IMR-90 (cell line): ENCODE measurements at regions of chr15 and their contacts with region 1.

Region 1: DNA sequence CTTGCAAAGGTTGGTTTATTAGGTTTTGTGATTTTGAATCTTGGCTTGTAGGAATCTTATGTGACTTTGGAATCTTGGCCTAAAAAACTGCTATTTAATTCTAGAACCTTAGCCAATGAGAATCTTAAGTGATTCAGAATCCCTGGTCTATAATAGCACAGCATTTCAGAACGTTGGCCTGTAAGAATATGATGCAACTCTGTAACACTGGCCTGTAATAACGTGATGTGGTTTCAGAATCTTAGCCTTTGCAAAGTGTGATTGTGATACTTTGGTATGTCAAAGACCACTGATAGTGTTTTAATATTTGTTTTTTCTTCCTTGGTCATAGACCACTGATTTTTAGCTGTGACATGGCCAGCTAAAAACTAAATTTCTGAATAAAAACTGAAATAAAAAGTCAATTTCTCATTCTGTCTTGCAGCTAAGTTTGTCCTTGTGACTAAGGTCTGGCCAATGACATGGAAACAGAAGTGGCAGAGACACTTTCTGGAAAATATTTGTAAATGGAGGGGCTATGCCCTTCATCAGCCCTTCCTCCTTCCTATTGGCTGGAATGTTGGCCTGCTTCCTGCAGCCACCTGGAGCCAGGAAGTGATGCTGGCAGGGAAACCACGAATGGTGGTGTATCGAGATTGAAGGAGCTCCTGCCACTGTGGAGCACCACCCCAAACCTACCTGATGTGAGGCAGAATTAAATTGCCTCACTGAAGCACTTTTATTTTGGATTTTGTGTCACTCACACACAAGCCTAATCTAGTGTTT is 42.3 kb upstream of the CORO2B start:
- DNase-seq: peak; percentile 98
- ATAC-seq: peak; percentile 89
- H3K4me3 ChIP-seq: no peak overlapping the region
- H3K27ac ChIP-seq: peak overlapping the region; percentile 96; the same call in 1 of the 2 replicates
- H3K4me1 ChIP-seq: peaks cover 7% of the 10 kb centered on the region
- H3K27me3 ChIP-seq: no peaks in the 10 kb centered on the region
- CTCF ChIP-seq: no peak
- POLR2A ChIP-seq: no peak
- RAD21 ChIP-seq: no peak

Region 2: GRCh38 chr15:68441045-68441743 is 95.3 kb before region 1 on chr15:
- CTCF ChIA-PET with region 1: interaction called, 3 read pairs
- POLR2A ChIA-PET with region 1: no interaction called
- dilution Hi-C with region 1: no loop called
- in situ Hi-C with region 1: no loop called
- intact Hi-C with region 1: loop called (anchors 5 kb)
- DNase-seq: peak; percentile 34
- ATAC-seq: peak; percentile 87
- H3K4me3 ChIP-seq: no peak overlapping the region
- H3K27ac ChIP-seq: peak overlapping the region; percentile 66; the same call in 1 of the 2 replicates
- H3K4me1 ChIP-seq: peaks cover 15% of the 10 kb centered on the region
- H3K27me3 ChIP-seq: peaks cover 20% of the 10 kb centered on the region
- CTCF ChIP-seq: no peak
- POLR2A ChIP-seq: no peak
- RAD21 ChIP-seq: no peak

Region 3: DNA sequence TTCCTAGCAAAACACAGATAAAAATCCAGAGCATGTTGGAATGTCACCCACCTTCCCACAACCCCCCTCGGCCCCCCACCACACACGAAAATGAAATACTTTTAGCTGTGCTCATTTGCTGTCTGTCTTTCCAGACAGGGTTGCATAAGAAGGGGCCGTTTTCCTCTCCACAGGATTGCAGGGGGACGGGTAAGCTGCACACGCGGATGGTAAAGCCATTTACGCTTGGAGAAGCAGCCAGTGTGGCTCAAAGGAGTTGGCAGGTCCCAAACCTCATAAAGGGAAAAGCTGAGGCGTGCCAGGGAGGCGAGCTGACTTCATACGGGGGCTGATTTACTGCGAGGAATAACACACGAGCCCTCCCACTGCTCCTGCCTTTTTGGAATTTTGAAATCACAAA is 57.1 kb before region 1 on chr15:
- CTCF ChIA-PET with region 1: no interaction called
- POLR2A ChIA-PET with region 1: no interaction called
- dilution Hi-C with region 1: no loop called
- in situ Hi-C with region 1: no loop called
- intact Hi-C with region 1: no loop called
- DNase-seq: peak; percentile 59
- ATAC-seq: peak; percentile 77
- H3K4me3 ChIP-seq: no peak overlapping the region
- H3K27ac ChIP-seq: peak overlapping the region; percentile 24; the same call in 1 of the 2 replicates
- H3K4me1 ChIP-seq: peaks cover 11% of the 10 kb centered on the region
- H3K27me3 ChIP-seq: peaks cover 8% of the 10 kb centered on the region
- CTCF ChIP-seq: no peak
- POLR2A ChIP-seq: no peak
- RAD21 ChIP-seq: no peak

Region 4: DNA sequence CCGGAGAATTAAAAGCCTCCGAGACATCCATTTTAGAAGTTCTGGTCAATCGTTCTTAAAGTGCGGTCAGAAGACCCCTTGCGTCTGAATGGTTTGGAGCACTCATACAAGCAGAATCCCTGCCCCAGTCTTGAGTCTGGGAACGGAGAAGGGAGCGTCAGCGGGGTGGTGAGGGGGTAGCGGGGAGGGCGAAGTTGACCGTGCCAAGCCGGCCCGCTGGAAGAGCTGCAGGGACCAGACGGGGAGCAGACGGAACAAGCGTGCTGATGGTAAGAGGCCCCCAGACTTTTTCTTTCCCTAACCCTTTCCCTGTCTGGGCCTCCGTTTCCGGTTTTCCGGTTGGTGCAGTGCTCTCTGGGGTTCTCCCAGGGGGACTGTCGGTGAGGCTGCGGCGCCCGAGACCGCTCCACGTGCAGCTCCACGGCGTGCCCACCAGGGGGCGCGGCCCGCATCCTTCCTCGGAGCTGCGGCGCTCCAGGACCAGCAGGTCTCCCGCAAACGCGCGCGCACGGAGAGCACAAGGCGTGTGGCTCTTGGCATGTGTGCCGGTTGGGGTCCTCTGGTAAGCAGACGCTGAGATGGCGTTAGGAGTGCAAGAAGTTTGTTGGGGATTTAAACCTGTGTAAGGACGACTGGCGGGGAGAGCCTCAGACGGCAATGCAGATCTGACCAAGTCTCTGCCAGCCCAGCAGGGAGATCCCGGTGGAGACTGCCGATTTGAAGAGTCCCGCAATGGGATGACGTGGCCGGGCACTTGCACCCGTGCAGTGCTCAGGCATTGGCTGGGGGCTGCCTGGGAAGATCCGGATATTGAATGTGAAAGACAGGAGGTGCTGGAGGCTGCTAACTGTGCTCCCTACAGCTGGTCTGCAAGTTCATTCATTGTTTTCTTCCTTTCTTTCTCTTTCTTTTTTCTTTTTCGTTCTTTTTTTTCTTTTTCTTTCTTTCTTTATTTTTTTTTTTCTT is 23.1 kb after region 1 on chr15:
- CTCF ChIA-PET with region 1: no interaction called
- POLR2A ChIA-PET with region 1: no interaction called
- dilution Hi-C with region 1: no loop called
- in situ Hi-C with region 1: no loop called
- intact Hi-C with region 1: no loop called
- DNase-seq: peak; percentile 70
- ATAC-seq: peak; percentile 99
- H3K4me3 ChIP-seq: peak overlapping the region; percentile 51
- H3K27ac ChIP-seq: no peak overlapping the region
- H3K4me1 ChIP-seq: no peaks in the 10 kb centered on the region
- H3K27me3 ChIP-seq: peaks cover 4% of the 10 kb centered on the region; the same call in 1 of the 2 replicates
- CTCF ChIP-seq: peak; percentile 90
- POLR2A ChIP-seq: no peak
- RAD21 ChIP-seq: peak; percentile 87

Region 5: GRCh38 chr15:68599560-68600071 is 63.1 kb after region 1 on chr15:
- CTCF ChIA-PET with region 1: no interaction called
- POLR2A ChIA-PET with region 1: no interaction called
- dilution Hi-C with region 1: no loop called
- in situ Hi-C with region 1: no loop called
- intact Hi-C with region 1: no loop called
- DNase-seq: peak; percentile 75
- ATAC-seq: peak; percentile 84
- H3K4me3 ChIP-seq: no peak overlapping the region
- H3K27ac ChIP-seq: no peak overlapping the region
- H3K4me1 ChIP-seq: peaks cover 19% of the 10 kb centered on the region
- H3K27me3 ChIP-seq: no peaks in the 10 kb centered on the region
- CTCF ChIP-seq: no peak
- POLR2A ChIP-seq: no peak
- RAD21 ChIP-seq: no peak